CD8-positive, alpha-beta T cell (primary cell): ENCODE measurements at regions of chr1 and their contacts with region 1.

Region 1: DNA sequence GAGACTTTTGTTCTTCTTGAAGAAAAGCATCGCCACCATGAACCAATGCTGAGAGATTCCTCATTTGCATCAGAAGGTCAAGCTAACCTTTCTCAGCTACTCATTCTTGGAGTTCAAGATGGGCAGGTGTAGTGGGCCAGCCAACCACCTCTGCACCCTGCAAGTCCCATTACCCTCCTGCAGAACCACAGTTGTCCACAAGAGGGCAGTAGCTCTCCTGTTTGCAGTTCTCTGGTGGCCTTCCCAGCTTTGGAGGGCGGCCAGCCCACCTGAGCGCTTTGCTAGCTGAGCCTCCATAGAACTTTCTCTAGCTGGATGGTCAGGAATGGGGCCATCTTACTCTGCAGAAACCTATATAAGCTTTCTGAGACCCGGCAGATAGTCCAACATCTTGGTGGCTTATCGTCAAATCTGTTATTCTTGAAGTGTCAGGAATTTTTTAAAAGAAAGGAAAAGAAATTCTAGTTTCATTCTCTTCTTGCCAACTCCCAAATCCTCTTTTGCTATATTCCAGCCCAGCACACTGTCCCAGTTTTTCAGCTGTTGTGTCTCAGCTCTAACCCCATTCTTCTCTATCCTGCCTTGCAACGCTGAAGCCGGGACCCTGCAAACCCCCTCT is 11.0 kb upstream of the LMX1A start:
- DNase-seq: peak; percentile 62 to 84 (median 77)
- ATAC-seq: peak; percentile 71
- H3K4me3 ChIP-seq: no peak overlapping the region
- H3K4me3 Mint-ChIP-seq: no peak overlapping the region
- H3K27ac ChIP-seq: no peak overlapping the region
- H3K27ac Mint-ChIP-seq: no peak overlapping the region
- H3K4me1 ChIP-seq: no peaks in the 10 kb centered on the region
- H3K4me1 Mint-ChIP-seq: no peaks in the 10 kb centered on the region
- H3K27me3 ChIP-seq: no peaks in the 10 kb centered on the region
- H3K27me3 Mint-ChIP-seq: peaks cover 60% of the 10 kb centered on the region
- CTCF ChIP-seq: peak; percentile 93

Region 2: GRCh38 chr1:165344198-165344597 is 23.3 kb before region 1 on chr1:
- CTCF ChIA-PET with region 1: interaction called, 19 read pairs
- POLR2A ChIA-PET with region 1: no interaction called
- intact Hi-C with region 1: no loop called
- DNase-seq: no peak
- ATAC-seq: no peak
- H3K4me3 ChIP-seq: no peak overlapping the region
- H3K4me3 Mint-ChIP-seq: no peak overlapping the region
- H3K27ac ChIP-seq: no peak overlapping the region
- H3K27ac Mint-ChIP-seq: no peak overlapping the region
- H3K4me1 ChIP-seq: no peaks in the 10 kb centered on the region
- H3K4me1 Mint-ChIP-seq: no peaks in the 10 kb centered on the region
- H3K27me3 ChIP-seq: no peaks in the 10 kb centered on the region
- H3K27me3 Mint-ChIP-seq: peaks cover 59% of the 10 kb centered on the region
- CTCF ChIP-seq: no peak

Region 3: DNA sequence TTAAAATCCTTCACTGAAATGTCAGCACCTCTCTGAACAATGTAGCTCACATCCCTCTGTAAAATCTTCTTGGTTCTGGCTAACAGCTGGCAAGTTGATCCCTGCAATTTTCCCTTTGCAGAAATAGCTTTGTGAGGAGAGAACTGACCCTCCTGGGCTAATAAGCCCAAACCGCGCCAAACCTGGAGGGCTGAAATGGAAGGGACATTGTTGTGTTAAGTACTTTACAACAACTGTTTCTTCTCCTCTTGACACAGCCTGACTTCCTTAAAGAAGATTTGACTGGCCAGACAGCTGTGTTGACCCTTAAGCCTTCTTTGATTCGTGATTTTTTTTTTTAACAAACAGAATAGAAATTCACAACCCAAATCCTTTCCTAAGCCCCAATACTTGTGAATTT is 16.6 kb before region 1 on chr1:
- CTCF ChIA-PET with region 1: interaction called, 19 read pairs
- POLR2A ChIA-PET with region 1: no interaction called
- intact Hi-C with region 1: no loop called
- DNase-seq: no peak
- ATAC-seq: no peak
- H3K4me3 ChIP-seq: no peak overlapping the region
- H3K4me3 Mint-ChIP-seq: no peak overlapping the region
- H3K27ac ChIP-seq: no peak overlapping the region
- H3K27ac Mint-ChIP-seq: no peak overlapping the region
- H3K4me1 ChIP-seq: no peaks in the 10 kb centered on the region
- H3K4me1 Mint-ChIP-seq: peaks cover 7% of the 10 kb centered on the region
- H3K27me3 ChIP-seq: peaks cover 0 to 13% of the 10 kb centered on the region in 2 experiments
- H3K27me3 Mint-ChIP-seq: peaks cover 71% of the 10 kb centered on the region
- CTCF ChIP-seq: no peak

Region 4: DNA sequence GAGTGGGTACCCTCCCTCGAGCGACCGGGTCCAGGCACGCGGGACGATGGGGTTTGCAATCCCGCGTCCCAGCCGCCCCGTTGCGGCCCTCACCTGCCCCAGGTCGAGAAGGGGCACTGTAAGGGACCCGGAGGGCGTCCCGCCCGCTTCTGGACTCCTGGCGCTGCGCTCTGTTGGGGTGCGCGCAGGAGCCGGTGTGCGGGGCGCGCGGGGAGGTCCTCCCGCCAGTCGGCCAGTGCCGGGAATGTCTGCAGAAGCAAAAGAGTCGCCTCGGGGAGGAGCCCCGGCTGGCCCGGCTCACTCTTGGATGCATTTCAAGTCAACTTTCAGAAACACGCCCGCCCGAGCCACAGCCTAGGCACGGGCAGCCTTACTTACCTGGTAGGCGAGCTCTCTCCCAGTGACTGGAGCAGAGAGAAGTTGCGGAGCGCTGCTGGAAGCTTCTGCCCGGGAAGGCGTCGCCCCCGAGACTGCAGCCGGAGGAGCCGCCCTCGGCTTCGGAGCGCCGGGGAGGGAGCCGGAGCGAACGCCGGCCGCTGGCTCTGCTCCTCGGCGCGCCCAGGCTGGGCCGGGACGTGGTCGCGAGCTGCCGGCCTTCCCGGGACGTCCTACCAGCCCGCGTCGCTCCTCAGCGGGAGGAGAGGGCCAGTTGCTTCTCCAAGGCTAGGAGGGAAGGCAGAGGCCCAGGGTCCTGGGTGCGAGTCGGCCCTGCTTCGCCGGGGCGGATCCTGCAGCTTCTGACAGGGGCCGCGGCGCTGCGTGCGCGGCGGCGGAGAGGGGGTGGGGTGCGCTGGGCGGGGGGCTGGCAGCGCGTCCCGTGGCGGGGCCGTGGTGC is 11.3 kb before region 1 on chr1 and contains the start of gene LMX1A:
- CTCF ChIA-PET with region 1: interaction called, 19 read pairs
- POLR2A ChIA-PET with region 1: no interaction called
- intact Hi-C with region 1: no loop called
- DNase-seq: no peak
- ATAC-seq: no peak
- H3K4me3 ChIP-seq: no peak within 1 kb of the TSS
- H3K4me3 Mint-ChIP-seq: no peak within 1 kb of the TSS
- H3K27ac ChIP-seq: no peak within 1 kb of the TSS
- H3K27ac Mint-ChIP-seq: no peak within 1 kb of the TSS
- H3K4me1 ChIP-seq: no peaks in the 10 kb centered on the region
- H3K4me1 Mint-ChIP-seq: peaks cover 10% of the 10 kb centered on the region
- H3K27me3 ChIP-seq: peaks cover 0 to 13% of the 10 kb centered on the region in 2 experiments
- H3K27me3 Mint-ChIP-seq: peaks cover 63% of the 10 kb centered on the region
- CTCF ChIP-seq: no peak
- total RNA-seq, gene LMX1A: not detected

Region 5: GRCh38 chr1:165383067-165383466 is 15.6 kb after region 1 on chr1:
- CTCF ChIA-PET with region 1: interaction called, 16 read pairs
- POLR2A ChIA-PET with region 1: no interaction called
- intact Hi-C with region 1: no loop called
- DNase-seq: no peak
- ATAC-seq: no peak
- H3K4me3 ChIP-seq: no peak overlapping the region
- H3K4me3 Mint-ChIP-seq: no peak overlapping the region
- H3K27ac ChIP-seq: no peak overlapping the region
- H3K27ac Mint-ChIP-seq: no peak overlapping the region
- H3K4me1 ChIP-seq: no peaks in the 10 kb centered on the region
- H3K4me1 Mint-ChIP-seq: no peaks in the 10 kb centered on the region
- H3K27me3 ChIP-seq: no peaks in the 10 kb centered on the region
- H3K27me3 Mint-ChIP-seq: peaks cover 55% of the 10 kb centered on the region
- CTCF ChIP-seq: no peak

Region 6: GRCh38 chr1:165586435-165586834 is 219.0 kb after region 1 on chr1:
- CTCF ChIA-PET with region 1: interaction called, 87 read pairs
- POLR2A ChIA-PET with region 1: no interaction called
- intact Hi-C with region 1: no loop called
- DNase-seq: no peak
- ATAC-seq: no peak
- H3K4me3 ChIP-seq: no peak overlapping the region
- H3K4me3 Mint-ChIP-seq: no peak overlapping the region
- H3K27ac ChIP-seq: no peak overlapping the region
- H3K27ac Mint-ChIP-seq: no peak overlapping the region
- H3K4me1 ChIP-seq: no peaks in the 10 kb centered on the region
- H3K4me1 Mint-ChIP-seq: no peaks in the 10 kb centered on the region
- H3K27me3 ChIP-seq: no peaks in the 10 kb centered on the region
- H3K27me3 Mint-ChIP-seq: peaks cover 44% of the 10 kb centered on the region
- CTCF ChIP-seq: no peak

Region 7: DNA sequence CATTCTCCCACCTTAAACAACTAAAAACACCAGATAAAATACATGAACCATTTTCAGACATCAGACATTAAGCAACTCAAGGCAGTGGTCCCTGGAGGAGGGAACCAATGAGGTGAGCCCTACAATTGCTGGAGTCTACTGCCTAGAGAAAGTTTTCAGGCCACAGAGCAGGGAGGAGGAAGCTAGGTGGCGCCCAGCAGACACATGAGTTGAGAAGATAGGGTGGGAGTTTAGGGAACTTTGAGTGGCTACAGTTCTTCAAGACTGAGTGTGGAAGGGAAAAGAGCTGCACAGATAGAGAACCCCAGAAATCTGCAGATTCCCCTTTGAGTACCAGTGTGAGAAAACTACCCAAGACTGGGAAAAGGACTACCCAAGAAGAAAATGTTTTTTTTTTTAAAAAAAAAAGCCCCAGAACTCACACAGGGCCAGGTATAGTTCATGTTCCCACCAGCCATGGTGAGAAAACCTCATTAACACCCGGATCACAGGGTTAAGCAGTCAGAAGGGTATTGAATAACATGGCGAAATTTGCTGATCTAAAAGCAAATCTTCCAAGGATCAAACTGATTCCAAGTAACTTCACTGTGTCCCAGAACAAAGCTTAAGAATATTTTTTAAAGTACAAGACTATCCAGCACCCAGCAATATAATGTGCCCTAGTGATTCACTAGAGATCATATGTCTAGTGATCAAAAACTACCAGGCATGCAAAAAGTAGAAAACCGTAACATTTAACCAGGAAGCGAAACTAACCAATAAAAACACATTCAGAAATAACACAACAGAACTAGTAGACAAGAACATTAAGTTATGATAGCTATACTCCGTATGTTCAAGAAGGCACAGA is 318.9 kb after region 1 on chr1:
- CTCF ChIA-PET with region 1: no interaction called
- POLR2A ChIA-PET with region 1: no interaction called
- intact Hi-C with region 1: no loop called
- DNase-seq: peak in 2 of 9 experiments; percentile 35 to 37
- ATAC-seq: peak; percentile 36
- H3K4me3 ChIP-seq: no peak overlapping the region
- H3K4me3 Mint-ChIP-seq: no peak overlapping the region
- H3K27ac ChIP-seq: peak overlapping the region in 1 of 2 experiments; percentile 38
- H3K27ac Mint-ChIP-seq: peak overlapping the region; percentile 74
- H3K4me1 ChIP-seq: peaks cover 14% of the 10 kb centered on the region
- H3K4me1 Mint-ChIP-seq: peaks cover 46% of the 10 kb centered on the region
- H3K27me3 ChIP-seq: no peaks in the 10 kb centered on the region
- H3K27me3 Mint-ChIP-seq: no peaks in the 10 kb centered on the region
- CTCF ChIP-seq: no peak